WTC11 (cell line): ENCODE measurements at regions of chr1 and their contacts with region 1.

Region 1: GRCh38 chr1:6579374-6580118 is at the start of gene ZBTB48:
- DNase-seq: peak; percentile 99
- ATAC-seq: peak; percentile 98
- H3K4me3 Mint-ChIP-seq: peak within 1 kb of the TSS; percentile 85
- H3K27ac Mint-ChIP-seq: peak within 1 kb of the TSS; percentile 84
- H3K4me1 Mint-ChIP-seq: peaks cover 17% of the 10 kb centered on the region
- H3K27me3 Mint-ChIP-seq: no peaks in the 10 kb centered on the region
- CTCF ChIP-seq: no peak
- total RNA-seq, gene ZBTB48: 29.1 to 37.5 TPM (median 31.0 TPM) in 3 replicates

Region 2: GRCh38 chr1:6523566-6523965 is 56.0 kb before region 1 on chr1:
- CTCF ChIA-PET with region 1: no interaction called
- POLR2A ChIA-PET with region 1: no interaction called
- DNase-seq: peak; percentile 60
- ATAC-seq: peak; percentile 67
- H3K4me3 Mint-ChIP-seq: no peak overlapping the region
- H3K27ac Mint-ChIP-seq: peak overlapping the region; percentile 67
- H3K4me1 Mint-ChIP-seq: peaks cover 30% of the 10 kb centered on the region
- H3K27me3 Mint-ChIP-seq: no peaks in the 10 kb centered on the region
- CTCF ChIP-seq: peak; percentile 41

Region 3: GRCh38 chr1:6554031-6554906 is 25.3 kb before region 1 on chr1 and contains the start of gene NOL9:
- CTCF ChIA-PET with region 1: interaction called, 20 read pairs
- POLR2A ChIA-PET with region 1: interaction called, 3 read pairs
- DNase-seq: peak; percentile 97
- ATAC-seq: peak; percentile 93
- H3K4me3 Mint-ChIP-seq: peak within 1 kb of the TSS; percentile 84
- H3K27ac Mint-ChIP-seq: no peak within 1 kb of the TSS
- H3K4me1 Mint-ChIP-seq: peaks cover 12% of the 10 kb centered on the region
- H3K27me3 Mint-ChIP-seq: no peaks in the 10 kb centered on the region; the same call in 1 of the 2 replicates
- CTCF ChIP-seq: peak; percentile 87
- total RNA-seq, gene NOL9: 36.0 to 37.4 TPM (median 37.4 TPM) in 3 replicates